Activated B cell treated with CpG ODN at 0.5 μM for 24 hours (primary cell): ENCODE measurements at regions of chr19 and their contacts with region 1.

Region 1: DNA sequence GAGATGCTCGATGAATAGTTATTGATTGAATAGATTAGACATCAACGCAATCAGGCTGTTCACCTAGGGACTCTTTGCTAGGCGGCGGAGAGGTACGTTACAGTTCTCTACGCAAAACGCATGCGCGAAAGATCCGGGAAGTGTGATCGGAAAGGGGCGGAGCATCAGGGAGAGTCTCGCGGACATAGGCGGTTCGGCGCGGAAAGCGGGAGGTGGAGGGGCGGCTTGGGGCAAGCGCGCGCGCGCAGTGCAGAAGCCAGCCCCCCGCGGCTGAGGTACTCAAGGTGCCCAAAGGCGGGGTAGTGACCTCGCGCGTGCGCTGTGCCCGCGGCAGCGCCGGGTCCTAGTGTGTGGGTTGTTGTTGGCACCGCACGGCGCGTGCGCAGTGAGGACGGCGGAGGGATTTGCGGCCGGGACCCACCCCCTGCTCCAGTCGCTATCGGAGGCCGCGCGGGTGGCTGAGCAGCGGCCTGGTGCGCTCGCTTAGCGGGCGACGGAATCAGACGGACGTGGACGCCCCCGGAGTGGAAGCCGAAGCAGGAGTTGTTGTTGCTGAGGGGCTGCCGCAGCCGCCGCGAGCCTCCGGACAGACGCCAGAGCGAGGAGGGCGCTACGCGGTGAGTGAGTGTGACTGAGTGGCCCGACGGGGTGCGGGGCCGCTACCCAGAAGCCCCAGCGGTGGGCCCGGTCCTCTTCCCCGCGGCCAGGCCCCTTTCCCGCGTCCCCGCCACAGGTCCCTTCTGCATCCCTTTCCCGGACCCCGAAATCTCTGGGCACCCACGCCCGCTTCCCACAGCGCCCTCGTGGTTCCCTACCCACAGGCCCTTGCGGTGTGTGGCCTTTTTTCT is at the start of gene SNRNP70:
- DNase-seq: peak; percentile 99
- ATAC-seq: peak; percentile 97
- H3K4me3 Mint-ChIP-seq: peak within 1 kb of the TSS; percentile 93
- H3K27ac Mint-ChIP-seq: peak within 1 kb of the TSS; percentile 93
- H3K4me1 Mint-ChIP-seq: peaks cover 41% of the 10 kb centered on the region
- H3K27me3 Mint-ChIP-seq: peaks cover 6% of the 10 kb centered on the region
- CTCF ChIP-seq: no peak
- total RNA-seq, gene SNRNP70: 268 and 298 TPM in 2 replicates

Region 2: DNA sequence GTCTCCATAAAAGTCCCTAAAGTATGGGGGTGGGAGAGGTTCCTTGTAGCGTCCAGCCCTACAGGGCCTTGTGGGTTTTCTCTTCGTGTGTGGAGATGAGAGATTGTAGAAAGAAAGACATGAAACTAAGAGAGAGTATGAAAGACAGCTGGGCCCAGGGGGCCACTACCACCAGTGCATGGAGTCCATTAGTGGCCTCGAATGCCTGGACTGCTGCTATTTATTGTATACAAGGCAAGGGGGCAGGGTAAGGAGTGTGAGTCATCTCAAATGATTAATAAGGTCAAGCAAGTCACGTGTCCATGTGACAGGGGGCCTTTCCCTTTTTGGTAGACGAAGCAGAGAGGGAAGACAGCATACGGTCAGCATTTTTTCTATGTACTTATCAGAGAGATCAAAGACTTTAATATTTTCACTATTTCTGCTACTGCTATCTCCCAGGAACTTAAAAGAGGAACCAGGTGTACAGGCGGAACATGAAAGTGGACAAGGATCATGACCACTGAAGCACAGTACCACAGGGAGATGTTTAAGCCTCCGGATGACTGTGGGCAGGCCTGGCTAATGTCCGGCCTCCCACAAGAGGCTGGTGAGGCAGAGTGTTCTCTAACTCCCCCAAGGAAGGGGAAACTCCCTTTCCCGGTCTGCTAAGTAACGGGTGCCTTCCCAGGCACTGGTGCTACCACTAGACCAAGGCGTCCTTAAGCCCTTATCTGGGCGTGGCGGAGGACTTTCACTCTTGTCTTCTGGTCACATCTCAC is 304.4 kb before region 1 on chr19:
- CTCF ChIA-PET with region 1: no interaction called
- POLR2A ChIA-PET with region 1: no interaction called
- intact Hi-C with region 1: loop called (anchors 10 kb)
- DNase-seq: no peak
- ATAC-seq: no peak
- H3K4me3 Mint-ChIP-seq: no peak overlapping the region
- H3K27ac Mint-ChIP-seq: peak overlapping the region; percentile 51
- H3K4me1 Mint-ChIP-seq: peaks cover 22% of the 10 kb centered on the region
- H3K27me3 Mint-ChIP-seq: no peaks in the 10 kb centered on the region
- CTCF ChIP-seq: no peak

Region 3: GRCh38 chr19:49118565-49119410 is 33.5 kb after region 1 on chr19 and contains the start of gene C19orf73:
- CTCF ChIA-PET with region 1: interaction called, 4 read pairs
- POLR2A ChIA-PET with region 1: interaction called, 3 read pairs
- intact Hi-C with region 1: loop called (anchors 2 kb)
- DNase-seq: peak; percentile 96
- ATAC-seq: peak; percentile 82
- H3K4me3 Mint-ChIP-seq: peak within 1 kb of the TSS; percentile 84
- H3K27ac Mint-ChIP-seq: peak within 1 kb of the TSS; percentile 87
- H3K4me1 Mint-ChIP-seq: peaks cover 44% of the 10 kb centered on the region
- H3K27me3 Mint-ChIP-seq: peaks cover 7% of the 10 kb centered on the region
- CTCF ChIP-seq: no peak
- total RNA-seq, gene C19orf73: 0.98 and 1.0 TPM in 2 replicates

Region 4: DNA sequence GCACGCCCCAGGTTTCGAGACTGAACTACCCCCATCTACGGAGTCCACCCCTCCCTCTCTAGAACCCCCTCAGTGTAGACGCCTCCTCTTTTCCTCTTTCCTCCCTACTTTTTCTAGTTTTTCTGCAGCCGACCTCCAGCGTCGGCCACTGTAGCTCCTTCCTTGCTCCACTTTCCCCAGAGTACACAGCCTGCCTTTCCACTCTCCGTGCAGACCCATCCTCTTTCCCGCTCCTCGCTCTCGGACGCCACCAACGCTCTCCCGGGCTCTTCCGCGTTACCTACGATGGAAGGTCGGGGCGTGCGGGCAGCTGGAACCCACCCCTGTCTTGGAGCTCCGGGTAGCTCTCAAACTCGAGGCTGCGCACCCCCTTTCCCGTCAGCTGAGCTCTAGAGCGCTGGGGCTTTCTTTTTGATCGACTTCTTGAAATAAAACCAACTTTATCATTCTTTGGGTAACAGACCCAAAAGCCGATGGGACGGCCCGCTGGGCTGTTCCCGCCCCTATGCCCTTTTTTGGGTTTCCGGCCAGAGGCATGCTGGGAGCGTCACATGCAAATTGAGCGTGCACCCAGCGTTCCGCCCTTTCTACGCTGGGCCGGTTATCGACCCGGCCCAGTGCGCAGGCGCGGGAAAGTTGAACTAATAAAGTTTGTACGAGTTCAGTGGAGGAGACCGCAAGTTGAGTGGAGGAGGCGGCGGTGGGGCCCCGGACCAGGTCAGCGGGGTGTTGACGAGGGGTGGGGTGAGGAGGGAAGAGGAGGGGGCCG is 580.3 kb after region 1 on chr19 and contains the starts of genes BCL2L12 and IRF3:
- CTCF ChIA-PET with region 1: no interaction called
- POLR2A ChIA-PET with region 1: interaction called, 12 read pairs
- intact Hi-C with region 1: no loop called
- DNase-seq: peak; percentile 99
- ATAC-seq: peak; percentile 86
- H3K4me3 Mint-ChIP-seq: peak within 1 kb of the TSS; percentile 98
- H3K27ac Mint-ChIP-seq: peak within 1 kb of the TSS; percentile 95
- H3K4me1 Mint-ChIP-seq: peaks cover 40% of the 10 kb centered on the region
- H3K27me3 Mint-ChIP-seq: no peaks in the 10 kb centered on the region
- CTCF ChIP-seq: no peak
- total RNA-seq, gene BCL2L12: 30.7 and 39.1 TPM in 2 replicates
- total RNA-seq, gene IRF3: 145 and 171 TPM in 2 replicates